Activated naive CD4-positive, alpha-beta T cell treated with anti-CD3 and anti-CD28 coated beads for 36 hours (primary cell): ENCODE measurements at regions of chrX and their contacts with region 1.

Region 1: GRCh38 chrX:65866146-65866545 is 173.7 kb downstream of the VSIG4 start:
- DNase-seq: peak; percentile 58
- H3K4me3 Mint-ChIP-seq: no peak overlapping the region
- H3K27ac Mint-ChIP-seq: peak overlapping the region; percentile 58
- H3K4me1 Mint-ChIP-seq: peaks cover 36% of the 10 kb centered on the region
- H3K27me3 Mint-ChIP-seq: no peaks in the 10 kb centered on the region

Region 2: GRCh38 chrX:65679071-65679540 is 187.0 kb before region 1 on chrX:
- CTCF ChIA-PET with region 1: no interaction called
- intact Hi-C with region 1: loop called (anchors 5 kb)
- DNase-seq: no peak
- H3K4me3 Mint-ChIP-seq: no peak overlapping the region
- H3K27ac Mint-ChIP-seq: peak overlapping the region; percentile 91
- H3K4me1 Mint-ChIP-seq: peaks cover 86% of the 10 kb centered on the region
- H3K27me3 Mint-ChIP-seq: no peaks in the 10 kb centered on the region

Region 3: GRCh38 chrX:65750674-65751469 is 115.3 kb before region 1 on chrX:
- CTCF ChIA-PET with region 1: no interaction called
- intact Hi-C with region 1: loop called (anchors 2 kb)
- DNase-seq: peak; percentile 60
- H3K4me3 Mint-ChIP-seq: peak overlapping the region; percentile 4
- H3K27ac Mint-ChIP-seq: peak overlapping the region; percentile 30
- H3K4me1 Mint-ChIP-seq: peaks cover 56% of the 10 kb centered on the region
- H3K27me3 Mint-ChIP-seq: no peaks in the 10 kb centered on the region

Region 4: GRCh38 chrX:65932176-65933084 is 66.3 kb after region 1 on chrX:
- CTCF ChIA-PET with region 1: no interaction called
- intact Hi-C with region 1: loop called (anchors 1 kb)
- DNase-seq: peak; percentile 66
- H3K4me3 Mint-ChIP-seq: no peak overlapping the region
- H3K27ac Mint-ChIP-seq: peak overlapping the region; percentile 73
- H3K4me1 Mint-ChIP-seq: peaks cover 20% of the 10 kb centered on the region
- H3K27me3 Mint-ChIP-seq: no peaks in the 10 kb centered on the region

Region 5: GRCh38 chrX:66074920-66075879 is 209.1 kb after region 1 on chrX:
- CTCF ChIA-PET with region 1: no interaction called
- intact Hi-C with region 1: loop called (anchors 10 kb)
- DNase-seq: peak; percentile 73
- H3K4me3 Mint-ChIP-seq: peak overlapping the region; percentile 28
- H3K27ac Mint-ChIP-seq: peak overlapping the region; percentile 48
- H3K4me1 Mint-ChIP-seq: peaks cover 25% of the 10 kb centered on the region
- H3K27me3 Mint-ChIP-seq: no peaks in the 10 kb centered on the region